ENCODE measurements at regions of chr22 and their contacts with region 1.

Region 1: GRCh38 chr22:35582861-35583670 is 34.1 kb downstream of the MB start:
- DNase-seq: peak; percentile 87
- CTCF ChIP-seq: peak; percentile 88

Region 2: DNA sequence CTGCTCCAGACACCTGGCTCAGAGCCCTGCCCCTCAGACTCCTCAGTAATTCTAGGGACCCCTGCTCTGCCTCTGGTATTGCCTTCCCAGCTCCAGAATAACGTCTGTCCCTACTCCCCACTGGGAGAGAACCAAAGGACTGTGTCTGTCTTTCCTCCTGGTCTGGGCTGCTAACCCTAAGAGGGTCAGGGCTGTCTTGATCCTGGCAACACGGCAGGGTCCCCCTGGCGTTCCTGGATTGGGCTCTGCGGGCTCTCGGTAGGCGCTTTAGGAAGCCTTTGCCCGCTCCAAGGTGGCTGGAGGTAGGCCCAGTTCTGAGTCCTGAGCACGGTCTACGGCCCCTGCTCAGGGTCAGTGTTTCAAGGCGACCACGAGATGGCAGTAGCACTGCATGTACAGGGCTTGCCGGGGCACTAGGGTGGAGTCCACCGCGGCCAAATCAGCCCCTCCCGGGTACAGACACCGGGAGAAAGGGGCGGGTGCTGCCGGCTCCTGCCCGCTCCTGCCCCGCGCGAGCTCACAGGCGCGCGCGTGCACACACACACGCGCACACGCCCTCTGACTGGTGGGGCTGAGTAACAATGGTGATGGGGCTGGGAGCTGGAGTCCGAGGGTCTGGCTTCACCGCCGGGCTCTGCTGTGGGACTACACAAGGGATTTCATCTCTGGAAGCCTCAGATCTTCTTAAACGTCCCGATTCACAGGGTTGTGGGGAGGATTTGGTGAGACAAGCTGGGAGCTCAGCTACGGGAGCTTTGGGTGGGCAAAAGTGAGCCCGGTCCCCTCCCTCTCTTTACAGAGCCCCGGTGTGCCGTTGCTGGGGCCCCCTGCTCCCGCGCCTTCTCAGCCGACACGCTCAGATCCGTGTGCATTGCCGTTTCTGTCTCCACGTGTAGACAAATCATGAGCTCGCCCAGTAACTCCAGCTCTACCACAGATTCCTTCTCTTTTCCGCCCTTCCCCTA is 232.2 kb before region 1 on chr22:
- in situ Hi-C with region 1: loop called (anchors 10 kb)
- DNase-seq: peak; percentile 94
- CTCF ChIP-seq: peak; percentile 92

Region 3: DNA sequence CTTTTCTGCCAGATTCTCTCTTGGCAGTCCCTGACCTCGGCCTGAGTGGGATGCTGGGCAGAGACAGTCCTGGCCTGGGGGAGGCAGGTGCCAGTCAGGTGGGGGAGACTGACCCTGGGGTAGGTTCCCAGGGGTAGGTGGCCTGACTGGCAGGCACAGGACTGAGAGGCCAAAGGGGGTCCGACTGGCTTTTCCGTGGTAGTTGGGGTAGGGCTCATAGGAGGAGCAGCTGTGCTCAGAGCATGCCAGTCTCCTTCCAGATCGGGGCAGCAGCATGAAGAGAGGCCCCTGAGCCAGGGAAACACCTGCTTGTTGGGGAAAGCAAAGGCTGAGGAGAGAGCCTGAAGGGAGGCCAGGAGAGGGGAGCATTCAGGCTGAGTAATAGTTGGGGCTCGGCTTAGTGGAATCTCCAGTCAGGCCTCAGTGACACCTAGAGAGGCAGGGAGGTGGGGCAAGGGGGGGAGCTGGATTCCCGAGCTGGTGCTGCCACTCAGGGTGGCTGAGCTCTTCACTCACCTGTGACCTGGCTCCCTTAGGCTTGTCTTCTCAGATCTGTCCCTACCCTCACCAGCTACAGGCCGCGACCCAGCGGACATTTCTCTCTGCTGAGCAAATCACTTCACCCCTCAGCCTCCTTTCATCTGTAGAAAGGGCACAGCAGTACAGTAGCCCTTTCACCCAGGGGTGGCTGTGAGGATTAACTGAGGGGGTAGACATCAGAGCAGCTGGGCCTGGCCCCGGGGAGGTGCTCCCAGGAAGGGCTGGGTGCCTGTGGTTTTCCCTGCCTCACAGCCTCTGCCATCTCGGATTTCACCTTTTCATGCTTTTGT is 156.9 kb before region 1 on chr22:
- in situ Hi-C with region 1: loop called (anchors 10 kb)
- DNase-seq: no peak
- CTCF ChIP-seq: no peak